ENCODE measurements at regions of chr19 and their contacts with region 1.

Region 1: DNA sequence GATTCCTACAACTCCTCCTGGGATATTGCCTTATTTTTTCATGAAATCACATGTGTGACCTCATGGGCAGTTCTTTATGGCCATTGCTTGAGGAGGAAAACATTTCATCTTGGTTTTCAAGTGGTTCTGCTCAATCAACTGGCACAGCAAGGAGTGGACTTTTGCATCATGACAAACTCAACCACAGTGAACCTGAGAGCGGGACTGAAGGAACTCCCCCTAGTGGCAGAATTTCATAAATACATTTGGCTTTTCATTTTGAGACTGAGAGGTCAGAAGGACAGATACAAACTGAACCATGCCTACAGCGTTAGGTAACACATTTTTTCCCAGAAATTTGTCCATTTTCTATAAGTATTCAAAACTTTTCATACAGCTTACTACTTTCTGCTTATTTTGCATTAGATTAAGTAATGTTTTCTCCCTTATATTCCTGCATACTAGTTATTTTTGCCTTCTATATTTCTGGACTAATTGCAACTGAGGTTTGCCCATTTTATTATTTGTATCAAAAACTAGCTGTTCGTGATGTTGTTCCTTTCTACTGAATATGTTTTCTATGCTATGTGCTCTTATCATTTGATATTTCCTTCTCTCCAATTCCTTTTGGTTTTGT is 13.4 kb upstream of the SIGLEC12 start:
- DNase-seq: peak; percentile 48 to 63
- ATAC-seq: peak; percentile 73 to 86
- H3K4me3 ChIP-seq: no peak overlapping the region
- H3K27ac ChIP-seq: no peak overlapping the region
- H3K4me1 ChIP-seq: no peaks in the 10 kb centered on the region
- CTCF ChIP-seq: peak; percentile 64
- EP300 ChIP-seq: no peak
- POLR2A ChIP-seq: no peak
- RAD21 ChIP-seq: peak; percentile 47 to 56

Region 2: GRCh38 chr19:51473009-51473707 is 41.8 kb before region 1 on chr19:
- CTCF ChIA-PET with region 1: interaction called, 32 read pairs
- POLR2A ChIA-PET with region 1: no interaction called
- DNase-seq: peak; percentile 48 to 72
- ATAC-seq: peak; percentile 77 to 90; a peak in 5 of 6 replicates
- H3K4me3 ChIP-seq: no peak overlapping the region
- H3K27ac ChIP-seq: no peak overlapping the region
- H3K4me1 ChIP-seq: peaks cover 13% of the 10 kb centered on the region; the same call in 2 of the 3 replicates
- CTCF ChIP-seq: peak; percentile 77
- EP300 ChIP-seq: no peak
- POLR2A ChIP-seq: no peak
- RAD21 ChIP-seq: peak; percentile 56 to 79; a peak in 4 of 5 replicates

Region 3: DNA sequence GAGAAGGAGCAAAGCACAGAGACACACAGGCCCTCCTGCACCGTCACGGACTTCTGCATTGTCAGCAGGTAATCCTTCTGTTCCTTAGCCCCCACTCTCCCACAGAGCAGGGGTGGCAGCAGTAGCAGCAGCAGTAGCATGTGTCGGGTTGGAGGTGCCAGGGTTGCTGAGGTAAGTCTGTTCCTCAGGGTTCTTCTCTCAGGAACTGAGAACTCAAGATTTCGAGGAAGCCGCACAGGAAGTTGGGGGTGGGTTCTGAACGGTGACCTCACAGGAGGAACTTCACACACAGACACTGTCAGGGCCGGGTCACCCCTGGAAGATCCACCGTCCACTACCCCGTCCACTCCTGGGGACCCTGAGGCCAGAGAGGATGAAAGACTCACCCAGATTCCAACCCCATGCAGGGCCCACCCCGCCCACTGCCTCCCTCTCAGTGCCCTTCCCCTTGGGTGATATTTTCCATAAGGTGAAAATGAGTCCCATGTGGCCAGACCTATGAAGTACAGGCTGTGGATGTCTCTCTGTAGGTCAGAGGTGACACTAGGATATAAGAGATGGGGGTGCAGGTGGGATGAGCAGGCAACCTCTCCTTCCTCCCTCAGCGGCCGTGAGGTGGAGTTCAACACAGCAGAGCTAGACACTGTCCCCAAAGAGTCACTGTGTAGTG is 13.2 kb before region 1 on chr19 and contains the start of gene SIGLEC12:
- CTCF ChIA-PET with region 1: interaction called, 14 read pairs
- POLR2A ChIA-PET with region 1: no interaction called
- DNase-seq: no peak
- ATAC-seq: no peak
- H3K4me3 ChIP-seq: no peak within 1 kb of the TSS
- H3K27ac ChIP-seq: no peak within 1 kb of the TSS
- H3K4me1 ChIP-seq: no peaks in the 10 kb centered on the region
- CTCF ChIP-seq: no peak
- EP300 ChIP-seq: no peak
- POLR2A ChIP-seq: no peak
- RAD21 ChIP-seq: no peak
- polyA plus RNA-seq, gene SIGLEC12: not detected in 2 replicates

Region 4: GRCh38 chr19:51525686-51526085 is 10.7 kb after region 1 on chr19:
- CTCF ChIA-PET with region 1: interaction called, 24 read pairs
- POLR2A ChIA-PET with region 1: no interaction called
- DNase-seq: no peak
- ATAC-seq: no peak
- H3K4me3 ChIP-seq: no peak overlapping the region
- H3K27ac ChIP-seq: no peak overlapping the region
- H3K4me1 ChIP-seq: no peaks in the 10 kb centered on the region
- CTCF ChIP-seq: no peak
- EP300 ChIP-seq: no peak
- POLR2A ChIP-seq: no peak
- RAD21 ChIP-seq: no peak

Region 5: GRCh38 chr19:51546650-51547396 is 31.8 kb after region 1 on chr19:
- CTCF ChIA-PET with region 1: interaction called, 15 read pairs
- POLR2A ChIA-PET with region 1: no interaction called
- DNase-seq: no peak
- ATAC-seq: no peak
- H3K4me3 ChIP-seq: no peak overlapping the region
- H3K27ac ChIP-seq: no peak overlapping the region
- H3K4me1 ChIP-seq: no peaks in the 10 kb centered on the region
- CTCF ChIP-seq: no peak
- EP300 ChIP-seq: no peak
- POLR2A ChIP-seq: no peak
- RAD21 ChIP-seq: no peak